Dorsolateral prefrontal cortex (tissue), 120 donors: ENCODE measurements at regions of chr22 and their contacts with region 1.

Region 1: GRCh38 chr22:23539135-23539838 is 40.8 kb downstream of the IGLL1 start:
- DNase-seq: peak; percentile 65 to 90 (median 84)
- H3K4me3 ChIP-seq: peak overlapping the region in 38 of 59 donors; percentile 8 to 47 (median 30)
- H3K27ac ChIP-seq: peak overlapping the region in 2 of 59 donors; percentile 4 to 10
- H3K27me3 ChIP-seq: no peaks in the 10 kb centered on the region
- CTCF ChIP-seq: peak; percentile 56 to 94 (median 88)

Region 2: DNA sequence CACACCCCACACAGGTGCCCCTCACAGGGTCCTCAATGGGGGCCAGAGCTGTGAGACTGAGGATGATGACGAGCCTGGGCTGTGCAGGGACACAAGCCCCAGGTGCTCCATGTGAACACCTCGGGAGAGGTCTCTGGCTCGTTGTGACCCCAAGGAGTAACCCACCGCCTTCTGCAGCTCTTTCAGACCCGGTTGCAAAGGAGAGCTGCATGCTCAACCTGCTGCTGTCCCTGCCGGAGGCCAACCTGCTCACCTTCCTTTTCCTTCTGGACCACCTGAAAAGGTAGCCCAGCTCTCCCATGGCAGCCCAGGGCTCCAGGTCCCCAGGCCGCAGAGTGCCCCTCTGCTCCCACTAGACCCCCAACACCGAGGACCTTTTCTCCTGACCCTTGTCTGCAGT is 225.5 kb before region 1 on chr22:
- intact Hi-C with region 1: loop called in 1 of 2 experiments (anchors 5 kb)
- DNase-seq: no peak
- H3K4me3 ChIP-seq: no peak overlapping the region
- H3K27ac ChIP-seq: peak overlapping the region in 1 of 59 donors; percentile 11
- H3K27me3 ChIP-seq: no peaks in the 10 kb centered on the region
- CTCF ChIP-seq: no peak

Region 3: GRCh38 chr22:23385291-23386244 is 153.7 kb before region 1 on chr22:
- intact Hi-C with region 1: loop called in 1 of 2 experiments (anchors 5 kb)
- DNase-seq: peak; percentile 79 to 91 (median 88)
- H3K4me3 ChIP-seq: no peak overlapping the region
- H3K27ac ChIP-seq: peak overlapping the region in 4 of 59 donors; percentile 8 to 61 (median 42)
- H3K27me3 ChIP-seq: no peaks in the 10 kb centered on the region
- CTCF ChIP-seq: peak; percentile 93 to 100 (median 99)

Region 4: DNA sequence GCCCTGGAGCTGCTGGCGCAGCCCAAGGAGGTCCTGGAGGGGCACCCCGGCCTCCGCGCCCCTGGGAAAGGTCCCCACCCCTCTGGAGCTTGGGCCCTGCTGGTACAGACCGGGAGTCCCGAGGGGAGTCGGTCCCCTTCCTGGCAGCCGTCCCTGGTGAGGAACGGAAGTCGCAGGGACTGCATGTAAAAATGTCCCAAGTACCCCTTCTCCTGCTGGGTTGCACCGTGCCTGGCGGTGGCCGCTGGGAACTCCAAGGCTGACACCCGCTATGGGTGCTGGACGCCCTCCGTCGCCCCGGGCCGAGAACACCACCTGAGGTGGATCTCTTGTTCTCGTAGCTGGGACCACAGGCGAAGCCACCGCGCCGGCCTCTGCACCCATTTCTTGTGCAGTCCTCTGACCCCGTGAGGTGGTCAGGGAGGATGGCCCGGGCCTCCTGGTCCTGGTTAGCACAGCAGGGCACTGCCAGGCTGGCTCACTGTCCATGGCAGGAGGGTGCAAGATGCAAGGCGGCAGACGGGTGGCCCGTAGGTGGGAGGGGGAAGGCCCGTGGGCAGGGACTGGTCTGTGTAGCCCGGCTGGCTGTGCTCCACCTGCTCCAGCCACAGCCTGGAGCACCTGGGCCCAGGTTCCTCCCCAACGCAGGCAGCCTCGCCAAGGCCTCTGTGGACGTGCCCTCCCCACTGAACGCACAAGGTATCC is 124.4 kb before region 1 on chr22:
- intact Hi-C with region 1: no loop called
- DNase-seq: peak in 1 of 10 donors; percentile 33
- H3K4me3 ChIP-seq: no peak overlapping the region
- H3K27ac ChIP-seq: no peak overlapping the region
- H3K27me3 ChIP-seq: no peaks in the 10 kb centered on the region
- CTCF ChIP-seq: no peak

Region 5: DNA sequence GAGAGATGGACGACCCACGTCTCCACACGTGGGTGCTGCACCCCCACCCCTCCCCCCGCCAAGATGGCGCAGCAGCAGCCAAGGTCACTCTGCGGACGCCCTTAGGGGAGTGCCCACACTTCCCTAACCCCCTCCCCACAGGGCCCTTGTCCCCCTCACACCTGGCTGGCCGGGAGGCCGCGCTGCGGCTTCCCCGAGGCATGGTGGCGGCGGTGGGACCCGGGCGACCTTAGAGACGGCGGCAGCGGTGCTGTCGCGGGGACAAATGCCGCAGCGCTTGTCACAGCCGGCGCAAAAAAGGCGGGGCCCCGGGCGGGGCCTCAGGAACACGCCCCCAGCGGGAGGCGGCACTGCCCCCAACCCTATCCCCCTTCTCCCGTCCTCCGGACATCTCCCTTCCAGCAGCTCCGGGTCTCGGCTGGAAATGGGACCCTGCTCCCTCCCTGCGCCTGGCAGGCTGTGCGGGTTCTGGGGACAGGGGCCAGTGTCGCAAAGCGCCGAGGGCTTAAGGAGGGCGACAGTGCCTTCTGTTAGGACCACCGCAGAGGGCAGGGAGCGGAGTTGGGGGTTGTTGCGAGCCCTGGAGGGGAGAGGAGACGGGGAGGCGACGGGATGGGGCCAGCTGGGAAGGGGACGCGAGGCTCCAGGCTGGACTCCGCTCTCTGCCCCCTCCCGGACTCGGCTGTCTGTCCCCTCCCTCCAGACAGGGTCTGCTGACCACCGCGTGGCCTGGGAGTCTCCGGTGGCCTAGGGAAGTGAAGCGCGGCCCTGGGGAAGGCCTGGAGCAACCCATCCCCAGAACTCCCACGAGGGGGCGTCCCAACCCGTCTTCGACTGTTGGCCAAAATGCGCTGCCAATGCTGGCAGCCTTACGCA is 228.6 kb after region 1 on chr22 and contains the start of gene CHCHD10:
- intact Hi-C with region 1: loop called in 1 of 2 experiments (anchors 10 kb)
- DNase-seq: peak; percentile 82 to 91 (median 88)
- H3K4me3 ChIP-seq: peak within 1 kb of the TSS; percentile 56 to 97 (median 80)
- H3K27ac ChIP-seq: peak within 1 kb of the TSS; percentile 52 to 98 (median 93)
- H3K27me3 ChIP-seq: no peaks in the 10 kb centered on the region
- CTCF ChIP-seq: peak; percentile 38 to 93 (median 86)
- total RNA-seq, gene CHCHD10: 87.5 to 320 (median 183) TPM